AG04449 (cell line): ENCODE measurements at regions of chr16 and their contacts with region 1.

Region 1: DNA sequence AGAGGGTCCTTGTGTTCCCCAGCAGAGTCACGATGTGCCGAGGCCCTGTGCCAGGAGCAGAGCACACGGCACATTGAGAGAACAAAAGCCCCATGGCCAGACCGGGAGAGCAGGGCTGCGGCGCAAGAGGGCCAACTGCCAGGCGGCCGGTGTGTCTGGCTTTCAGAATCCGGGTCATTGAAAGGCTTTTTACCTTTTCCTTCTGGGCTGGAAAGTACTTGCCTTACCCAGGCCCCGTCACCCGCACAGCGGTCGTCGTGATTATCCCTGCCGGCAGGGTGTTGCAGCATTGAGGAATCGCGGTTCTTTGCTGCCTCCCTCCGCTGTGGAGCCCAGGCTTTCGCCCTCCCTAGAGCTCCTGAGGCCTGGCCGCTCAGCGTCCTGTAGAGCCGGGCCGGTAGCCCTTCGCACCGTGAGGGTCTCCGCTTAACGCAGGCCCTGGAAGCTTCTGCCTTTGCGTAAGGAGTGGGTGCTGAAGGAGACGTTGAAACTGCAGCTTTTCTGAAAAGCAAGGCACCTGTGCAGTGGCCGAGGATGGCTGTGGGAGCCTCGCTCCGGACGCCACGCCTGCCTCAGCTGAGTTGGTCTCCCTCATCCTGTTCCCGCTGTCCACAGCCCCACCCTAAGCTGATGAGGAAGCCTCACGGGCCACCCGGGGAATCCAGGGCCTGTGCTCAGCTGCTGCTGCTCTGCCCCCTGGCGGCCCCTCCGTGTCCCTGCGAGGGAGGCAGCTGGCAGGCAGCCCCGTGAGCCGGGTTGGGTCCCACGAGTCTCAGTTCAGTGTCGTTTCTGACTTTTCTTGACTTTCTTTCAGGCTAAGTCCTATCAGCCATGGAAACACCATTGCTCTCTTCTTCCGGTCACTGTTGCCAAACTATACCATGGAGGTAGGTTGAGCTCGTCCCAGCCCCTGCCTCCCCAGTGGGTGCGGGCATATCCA is 8.6 kb upstream of the MC1R start:
- DNase-seq: no peak
- H3K4me3 ChIP-seq: no peak overlapping the region
- CTCF ChIP-seq: peak; percentile 97

Region 2: GRCh38 chr16:89431158-89431584 is 478.9 kb before region 1 on chr16:
- CTCF ChIA-PET with region 1: no interaction called
- POLR2A ChIA-PET with region 1: no interaction called
- DNase-seq: no peak
- H3K4me3 ChIP-seq: no peak overlapping the region
- CTCF ChIP-seq: no peak

Region 3: DNA sequence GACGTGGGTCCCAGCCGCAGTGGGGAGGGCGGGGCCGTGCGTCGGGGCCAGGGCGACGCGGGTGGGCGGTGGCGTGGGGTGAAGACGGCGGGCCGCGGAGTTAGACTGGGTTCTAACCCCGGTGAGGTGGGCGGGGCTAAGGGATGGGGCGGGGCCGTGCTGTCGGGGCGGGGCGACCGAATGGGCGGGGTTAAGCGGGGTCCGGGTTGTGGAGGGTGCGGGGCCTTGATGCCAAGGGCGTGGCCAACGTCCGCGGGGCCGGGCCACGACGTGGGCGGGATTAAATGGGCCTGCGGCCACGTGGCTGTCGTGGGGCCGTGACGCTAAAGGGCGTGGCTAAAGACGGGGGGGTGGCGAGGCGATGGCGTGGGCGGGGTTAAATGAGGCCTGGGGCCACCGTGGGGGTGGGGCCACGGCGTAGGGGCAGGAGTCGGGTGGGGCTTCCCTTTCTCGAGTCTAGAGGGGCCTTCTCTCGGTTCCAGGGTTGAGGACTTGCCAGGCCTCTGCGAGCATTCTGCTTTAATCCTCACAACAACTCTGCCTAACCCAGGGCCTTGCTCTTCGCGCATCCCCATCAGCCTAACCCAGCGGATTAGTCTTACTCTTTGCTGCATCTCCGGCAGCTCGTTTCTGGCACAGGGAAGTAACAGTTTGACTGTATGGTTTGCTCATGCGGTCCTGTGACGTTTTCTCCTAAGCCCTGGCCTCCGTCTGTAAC is 35.9 kb before region 1 on chr16:
- CTCF ChIA-PET with region 1: interaction called, 15 read pairs
- POLR2A ChIA-PET with region 1: no interaction called
- DNase-seq: peak; percentile 69
- H3K4me3 ChIP-seq: peak overlapping the region; percentile 90
- CTCF ChIP-seq: no peak

Region 4: DNA sequence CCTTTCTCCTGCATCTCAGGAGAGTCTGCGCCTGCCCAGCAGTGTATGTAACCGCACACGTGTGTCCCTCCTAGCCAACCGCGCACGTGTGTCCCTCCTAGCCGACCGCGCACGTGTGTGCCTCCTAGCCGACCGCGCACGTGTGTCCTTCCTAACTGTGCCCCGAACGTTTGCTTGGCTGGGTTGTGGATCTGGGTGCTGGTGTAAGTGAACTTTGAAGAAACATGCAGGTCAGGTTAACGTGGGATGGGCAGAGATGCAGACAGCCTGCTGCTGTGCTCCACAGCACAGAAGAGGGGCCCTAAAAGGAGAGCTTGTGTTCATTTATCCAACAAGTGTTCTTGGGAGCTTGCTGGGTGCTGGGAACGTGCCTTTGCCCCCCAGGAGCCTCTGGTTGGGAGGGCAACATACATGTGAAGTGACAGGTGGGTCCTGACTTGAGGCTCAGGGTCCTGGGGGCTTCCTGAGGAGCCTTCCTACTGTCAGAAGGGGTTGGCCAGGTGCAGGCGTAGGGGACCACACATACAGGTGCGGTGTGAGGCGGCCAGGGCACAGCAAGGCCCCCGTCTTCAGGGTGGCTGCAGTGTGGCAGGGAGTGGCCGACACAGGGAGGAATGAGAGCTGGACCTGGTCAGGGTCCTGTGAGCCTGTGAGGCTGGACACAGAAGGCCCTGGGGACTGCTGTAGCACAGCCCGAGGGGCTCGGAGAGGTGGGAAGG is 26.2 kb before region 1 on chr16:
- CTCF ChIA-PET with region 1: interaction called, 26 read pairs
- POLR2A ChIA-PET with region 1: no interaction called
- DNase-seq: no peak
- H3K4me3 ChIP-seq: no peak overlapping the region
- CTCF ChIP-seq: no peak

Region 5: DNA sequence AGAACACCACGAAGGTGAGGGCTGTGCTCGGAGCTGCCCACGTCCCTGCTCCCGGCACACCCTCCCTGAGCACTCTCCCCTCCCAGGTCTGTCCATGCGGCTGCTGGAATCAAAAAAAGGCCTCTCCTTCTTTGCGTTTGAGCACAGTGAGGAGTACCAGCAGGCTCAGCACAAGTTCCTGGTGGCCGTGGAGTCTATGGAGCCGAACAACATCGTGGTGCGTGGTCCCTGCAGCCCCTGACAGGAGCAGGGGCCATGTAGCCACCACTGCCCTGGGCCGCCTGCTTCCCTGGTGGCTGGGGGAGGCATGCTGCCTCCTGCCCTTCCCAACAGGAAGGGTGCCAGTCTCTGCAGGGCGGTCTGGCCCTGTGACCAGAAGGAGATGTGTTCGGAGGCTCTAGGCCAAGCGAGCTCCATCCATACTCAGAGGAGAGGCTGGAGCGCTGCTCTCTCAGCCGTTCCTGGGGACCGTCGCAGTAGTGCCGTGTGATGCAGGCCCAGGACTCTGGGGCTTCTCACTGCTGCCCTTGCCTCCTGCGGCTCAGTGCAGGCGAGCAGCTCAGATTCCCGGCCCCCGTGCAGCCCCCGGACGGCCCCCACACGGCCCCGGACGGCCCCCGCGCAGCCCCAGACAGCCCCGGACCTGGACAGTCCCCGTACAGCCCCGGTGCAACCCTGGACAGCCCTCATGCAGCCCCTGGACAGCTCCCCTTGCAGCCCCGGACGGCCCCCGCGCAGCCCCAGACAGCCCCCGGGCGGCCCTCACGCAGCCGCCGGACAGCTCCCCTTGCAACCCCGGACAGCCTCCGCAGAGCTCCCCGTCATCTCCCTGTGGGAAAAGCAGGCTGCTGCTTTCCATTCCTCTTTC is 16.2 kb before region 1 on chr16:
- CTCF ChIA-PET with region 1: interaction called, 37 read pairs
- POLR2A ChIA-PET with region 1: interaction called, 3 read pairs
- DNase-seq: no peak
- H3K4me3 ChIP-seq: no peak overlapping the region
- CTCF ChIP-seq: no peak

Region 6: DNA sequence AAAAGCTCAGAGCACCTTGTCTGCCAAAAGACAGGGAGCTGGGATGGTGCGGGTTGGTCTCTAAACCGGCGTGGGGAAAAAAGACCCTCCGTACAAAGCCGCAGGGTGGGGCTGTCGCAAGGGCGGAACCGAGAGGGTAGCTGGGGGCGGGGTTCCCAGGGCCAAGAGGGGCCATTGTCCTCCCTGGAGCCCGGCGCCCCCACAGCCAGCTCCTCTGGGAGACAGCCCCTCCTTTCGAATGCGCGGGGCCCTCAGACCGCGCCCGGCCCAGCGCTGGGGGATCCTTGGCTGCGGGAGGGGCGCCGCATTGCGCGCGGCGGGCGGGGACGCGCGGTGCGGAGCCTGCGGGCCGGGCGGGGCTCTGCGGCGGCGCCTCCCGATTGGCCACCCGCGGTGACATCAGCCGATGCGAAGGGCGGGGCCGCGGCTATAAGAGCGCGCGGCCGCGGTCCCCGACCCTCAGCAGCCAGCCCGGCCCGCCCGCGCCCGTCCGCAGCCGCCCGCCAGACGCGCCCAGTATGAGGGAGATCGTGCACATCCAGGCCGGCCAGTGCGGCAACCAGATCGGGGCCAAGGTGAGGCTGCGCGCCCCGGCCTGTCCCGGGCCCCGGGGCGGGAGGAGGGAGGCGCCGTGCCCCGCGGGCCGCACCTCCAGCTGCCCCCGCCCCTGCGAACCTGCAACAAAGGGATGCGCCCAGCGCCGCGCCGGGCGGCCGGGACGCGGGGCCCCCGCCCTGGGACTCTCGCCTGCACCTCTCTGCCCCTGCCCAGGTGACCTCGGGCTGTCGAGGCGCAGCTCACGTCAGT is 13.0 kb after region 1 on chr16 and contains the start of gene TUBB3:
- CTCF ChIA-PET with region 1: interaction called, 34 read pairs
- POLR2A ChIA-PET with region 1: interaction called, 15 read pairs
- DNase-seq: no peak
- H3K4me3 ChIP-seq: peak within 1 kb of the TSS; percentile 83
- CTCF ChIP-seq: no peak